Naive thymus-derived CD8-positive, alpha-beta T cell (primary cell): ENCODE measurements at regions of chr16 and their contacts with region 1.

Region 1: GRCh38 chr16:30378236-30379204 is 3.8 kb downstream of the SEPTIN1 start:
- DNase-seq: peak; percentile 76 to 100 (median 99)
- ATAC-seq: peak; percentile 74 to 79
- H3K4me3 Mint-ChIP-seq: peak overlapping the region; percentile 95 to 100 (median 98)
- H3K27ac Mint-ChIP-seq: peak overlapping the region; percentile 99 to 100 (median 100)
- H3K4me1 Mint-ChIP-seq: peaks cover 29 to 71% (median 68%) of the 10 kb centered on the region in 4 donors
- H3K27me3 Mint-ChIP-seq: no peaks in the 10 kb centered on the region

Region 2: DNA sequence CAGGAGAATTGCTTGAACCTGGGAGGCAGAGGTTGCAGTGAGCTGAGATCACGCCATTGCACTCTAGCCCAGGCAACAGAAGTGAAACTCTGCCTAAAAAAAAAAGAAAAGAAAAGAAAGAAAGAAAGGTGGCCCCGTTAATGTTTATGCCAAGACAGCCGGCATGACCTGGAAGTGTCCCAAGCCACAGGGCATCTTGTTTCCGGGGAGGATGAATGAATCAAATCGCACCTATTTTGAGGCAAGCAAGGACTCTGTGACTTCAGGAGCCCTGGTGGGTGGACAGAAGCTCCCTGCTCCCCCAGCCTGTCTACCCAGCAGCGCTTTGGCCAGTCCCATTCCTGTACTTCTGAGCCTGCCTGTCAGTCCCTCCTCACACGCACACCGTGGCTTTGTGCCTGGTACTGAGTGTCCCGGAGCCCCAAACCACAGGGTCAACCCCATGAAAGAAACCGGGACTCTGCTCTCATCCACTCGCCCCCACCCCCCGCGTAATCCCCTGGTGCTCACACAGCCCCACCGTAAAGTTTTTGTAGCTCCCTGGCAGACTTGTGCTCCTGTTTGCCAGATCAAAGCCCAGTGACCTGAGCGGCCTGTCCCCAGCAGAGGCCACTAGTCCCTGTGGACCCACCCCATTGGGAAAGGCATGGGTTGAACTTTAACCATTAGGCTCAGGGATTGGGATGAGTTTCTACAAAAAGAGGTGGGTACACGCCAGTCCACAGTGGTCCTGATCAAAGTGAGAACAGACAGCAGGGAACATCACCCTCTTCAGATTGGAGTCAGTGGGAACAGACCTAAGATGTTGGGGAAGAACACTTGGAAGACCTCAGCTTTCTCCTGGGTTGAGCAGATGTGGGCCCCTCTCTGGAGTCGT is 42.7 kb before region 1 on chr16:
- POLR2A ChIA-PET with region 1: interaction called, 12 read pairs
- DNase-seq: peak in 3 of 10 donors; percentile 23 to 72 (median 45)
- ATAC-seq: peak in 1 of 2 donors; percentile 22
- H3K4me3 Mint-ChIP-seq: peak overlapping the region; percentile 83 to 94 (median 86)
- H3K27ac Mint-ChIP-seq: peak overlapping the region in 9 of 10 donors; percentile 66 to 95 (median 90)
- H3K4me1 Mint-ChIP-seq: peaks cover 7 to 46% (median 31%) of the 10 kb centered on the region in 4 donors
- H3K27me3 Mint-ChIP-seq: no peaks in the 10 kb centered on the region

Region 3: GRCh38 chr16:30395155-30395991 is 16.9 kb after region 1 on chr16 and contains the start of gene ZNF48:
- POLR2A ChIA-PET with region 1: interaction called, 82 read pairs
- DNase-seq: peak in 9 of 10 donors; percentile 20 to 70 (median 56)
- ATAC-seq: peak; percentile 72
- H3K4me3 Mint-ChIP-seq: peak within 1 kb of the TSS; percentile 76 to 94 (median 86)
- H3K27ac Mint-ChIP-seq: peak within 1 kb of the TSS; percentile 69 to 94 (median 88)
- H3K4me1 Mint-ChIP-seq: peaks cover 21 to 49% (median 45%) of the 10 kb centered on the region in 4 donors
- H3K27me3 Mint-ChIP-seq: no peaks in the 10 kb centered on the region
- polyA plus RNA-seq, gene ZNF48: 6.1 to 11.7 (median 7.5) TPM

Region 4: DNA sequence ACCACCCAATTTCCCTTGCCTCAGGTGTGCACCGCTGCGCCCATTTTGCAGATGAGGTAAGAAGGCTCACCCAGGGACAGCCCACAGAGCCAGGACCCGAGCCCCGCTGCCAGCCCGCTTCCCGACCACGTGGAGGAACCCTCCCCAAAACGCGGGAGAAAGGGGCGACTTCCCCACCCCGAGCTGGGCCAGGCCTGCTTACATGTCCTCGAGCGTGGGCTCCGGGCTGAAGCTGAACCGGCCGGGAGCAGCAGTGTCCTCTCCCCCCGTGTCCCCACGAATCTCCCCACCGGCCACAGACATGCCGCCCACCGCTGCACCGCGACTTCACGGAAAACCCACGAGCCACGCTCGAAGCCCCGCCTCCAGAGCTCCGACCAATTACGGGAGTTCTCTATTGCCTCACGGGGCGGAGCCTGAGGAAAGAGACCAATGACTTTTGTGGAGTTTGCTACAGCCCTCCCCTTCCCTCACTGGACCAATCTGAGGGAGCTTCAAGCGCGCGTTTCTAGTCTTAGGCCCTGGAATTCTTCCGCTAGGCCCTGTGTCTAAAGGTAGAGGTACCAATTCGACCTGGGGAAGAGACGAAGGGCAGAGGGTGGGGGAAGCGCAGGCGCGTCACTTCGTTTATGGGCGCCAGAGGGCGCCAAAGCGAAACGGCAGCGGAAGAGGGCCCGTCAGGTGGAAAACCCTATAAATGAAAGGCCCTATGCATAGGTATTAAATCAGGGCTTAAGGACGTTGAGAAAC is 51.3 kb after region 1 on chr16 and contains the start of gene DCTPP1:
- POLR2A ChIA-PET with region 1: interaction called, 10 read pairs
- DNase-seq: peak; percentile 84 to 99 (median 96)
- ATAC-seq: peak; percentile 97
- H3K4me3 Mint-ChIP-seq: no peak within 1 kb of the TSS
- H3K27ac Mint-ChIP-seq: peak within 1 kb of the TSS in 4 of 10 donors; percentile 52 to 80 (median 75)
- H3K4me1 Mint-ChIP-seq: peaks cover 5 to 35% (median 12%) of the 10 kb centered on the region in 4 donors
- H3K27me3 Mint-ChIP-seq: no peaks in the 10 kb centered on the region
- polyA plus RNA-seq, gene DCTPP1: 63.0 to 79.6 (median 64.0) TPM

Region 5: DNA sequence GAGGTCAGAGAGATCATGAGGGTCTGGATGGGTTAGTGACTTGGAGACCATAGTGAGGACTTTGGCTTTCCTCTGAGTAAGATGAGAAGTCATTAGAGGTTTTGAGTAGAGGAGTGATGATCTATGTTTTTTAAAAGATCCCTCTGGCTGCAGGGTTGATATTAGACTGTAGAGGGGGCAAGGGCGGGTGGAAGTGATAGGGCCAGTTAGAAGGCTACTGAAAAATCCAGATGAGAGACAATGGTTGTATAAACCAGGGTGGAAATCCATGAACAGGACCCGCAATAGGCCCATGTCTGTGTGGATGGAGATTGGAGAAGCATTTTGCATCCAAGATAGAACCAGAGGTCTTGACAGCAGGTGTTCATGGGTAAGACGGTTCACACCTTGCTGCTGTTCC is 103.8 kb after region 1 on chr16:
- POLR2A ChIA-PET with region 1: no interaction called
- DNase-seq: no peak
- ATAC-seq: peak; percentile 29 to 46
- H3K4me3 Mint-ChIP-seq: peak overlapping the region in 1 of 10 donors; percentile 5
- H3K27ac Mint-ChIP-seq: peak overlapping the region; percentile 15 to 91 (median 82)
- H3K4me1 Mint-ChIP-seq: peaks cover 19 to 65% (median 44%) of the 10 kb centered on the region in 4 donors
- H3K27me3 Mint-ChIP-seq: no peaks in the 10 kb centered on the region